ENCODE measurements at regions of chr13 and their contacts with region 1.

Region 1: GRCh38 chr13:30453727-30454126 is 12.0 kb downstream of the HMGB1 start:
- DNase-seq: no peak
- ATAC-seq: peak; percentile 12; the same call in 2 of the 3 replicates
- H3K4me3 ChIP-seq: no peak overlapping the region
- H3K27ac ChIP-seq: no peak overlapping the region
- H3K4me1 ChIP-seq: no peaks in the 10 kb centered on the region
- H3K27me3 ChIP-seq: no peaks in the 10 kb centered on the region
- CTCF ChIP-seq: no peak
- EP300 ChIP-seq: no peak
- POLR2A ChIP-seq: no peak
- RAD21 ChIP-seq: no peak

Region 2: DNA sequence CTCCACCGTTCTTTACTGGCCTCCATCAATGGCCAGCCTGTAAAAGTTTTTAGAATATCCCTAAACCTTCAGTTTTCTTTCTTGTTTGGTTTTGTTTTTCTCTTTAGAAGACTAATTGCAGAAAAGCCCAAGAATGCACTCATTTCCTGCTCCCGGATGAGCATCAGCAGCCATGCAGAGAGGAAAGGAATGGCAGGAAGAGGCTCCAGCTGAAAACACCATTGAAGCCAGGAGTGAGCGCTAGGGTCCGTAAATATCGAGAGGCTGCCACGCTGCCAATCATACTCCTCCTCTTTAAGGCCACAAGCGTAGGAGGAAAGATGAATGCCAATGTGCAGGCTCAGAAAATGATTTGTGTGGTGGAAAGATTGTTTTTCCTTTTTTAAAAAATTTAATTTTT is 88.9 kb before region 1 on chr13:
- CTCF ChIA-PET with region 1: no interaction called
- POLR2A ChIA-PET with region 1: no interaction called
- in situ Hi-C with region 1: no loop called
- intact Hi-C with region 1: loop called (anchors 1 kb)
- DNase-seq: no peak
- ATAC-seq: no peak
- H3K4me3 ChIP-seq: no peak overlapping the region
- H3K27ac ChIP-seq: no peak overlapping the region
- H3K4me1 ChIP-seq: peaks cover 23% of the 10 kb centered on the region
- H3K27me3 ChIP-seq: no peaks in the 10 kb centered on the region
- CTCF ChIP-seq: no peak
- EP300 ChIP-seq: no peak
- POLR2A ChIP-seq: no peak
- RAD21 ChIP-seq: no peak